ENCODE measurements at regions of chr10 and their contacts with region 1.

Region 1: GRCh38 chr10:47361293-47361692 is 13.1 kb downstream of the RBP3 start:
- DNase-seq: no peak
- H3K4me3 ChIP-seq: no peak overlapping the region
- CTCF ChIP-seq: peak; percentile 77

Region 2: DNA sequence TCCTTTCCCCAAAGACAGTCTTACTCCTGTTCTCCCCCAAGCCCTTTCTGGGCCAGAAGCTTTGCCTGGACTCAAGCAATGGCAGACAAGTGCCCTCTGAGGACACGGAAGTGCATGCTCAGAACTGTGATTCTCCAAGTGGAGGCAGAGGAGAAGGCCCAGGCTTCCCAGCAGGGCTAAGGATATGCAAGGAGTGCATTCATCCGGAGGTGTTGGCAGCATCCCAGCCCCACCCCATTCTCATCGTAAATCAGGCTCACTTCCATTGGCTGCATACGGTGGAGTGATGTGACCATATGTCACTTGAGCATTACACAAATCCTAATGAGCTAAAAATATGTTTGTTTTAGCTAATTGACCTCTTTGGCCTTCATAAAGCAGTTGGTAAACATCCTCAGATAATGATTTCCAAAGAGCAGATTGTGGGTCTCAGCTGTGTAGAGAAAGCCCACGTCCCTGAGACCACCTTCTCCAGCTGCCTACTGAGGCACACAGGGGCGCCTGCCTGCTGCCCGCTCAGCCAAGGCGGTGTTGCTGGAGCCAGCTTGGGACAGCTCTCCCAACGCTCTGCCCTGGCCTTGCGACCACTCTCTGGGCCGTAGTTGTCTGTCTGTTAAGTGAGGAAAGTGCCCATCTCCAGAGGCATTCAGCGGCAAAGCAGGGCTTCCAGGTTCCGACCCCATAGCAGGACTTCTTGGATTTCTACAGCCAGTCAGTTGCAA is 14.6 kb before region 1 on chr10:
- CTCF ChIA-PET with region 1: interaction called, 12 read pairs
- POLR2A ChIA-PET with region 1: no interaction called
- DNase-seq: no peak
- H3K4me3 ChIP-seq: no peak overlapping the region
- CTCF ChIP-seq: no peak

Region 3: GRCh38 chr10:47374611-47375536 is 13.6 kb after region 1 on chr10:
- CTCF ChIA-PET with region 1: interaction called, 56 read pairs
- POLR2A ChIA-PET with region 1: no interaction called
- DNase-seq: peak; percentile 33
- H3K4me3 ChIP-seq: no peak overlapping the region
- CTCF ChIP-seq: no peak

Measured in AG04449 (cell line).